IMR-90 (cell line): ENCODE measurements at regions of chr3 and their contacts with region 1.

Region 1: GRCh38 chr3:66138336-66139313 is 82.2 kb upstream of the SLC25A26 start:
- DNase-seq: peak; percentile 68
- ATAC-seq: peak; percentile 89
- H3K4me3 ChIP-seq: no peak overlapping the region
- H3K27ac ChIP-seq: no peak overlapping the region
- H3K4me1 ChIP-seq: peaks cover under 1% of the 10 kb centered on the region
- H3K27me3 ChIP-seq: no peaks in the 10 kb centered on the region
- CTCF ChIP-seq: peak; percentile 83
- POLR2A ChIP-seq: 0 out of 2 replicates have a peak, but pooled peaks have one; percentile 23
- RAD21 ChIP-seq: peak; percentile 91

Region 2: GRCh38 chr3:65888980-65889706 is 249.5 kb before region 1 on chr3:
- CTCF ChIA-PET with region 1: no interaction called
- POLR2A ChIA-PET with region 1: no interaction called
- dilution Hi-C with region 1: no loop called
- in situ Hi-C with region 1: no loop called
- intact Hi-C with region 1: loop called (anchors 10 kb)
- DNase-seq: peak; percentile 98
- ATAC-seq: peak; percentile 97
- H3K4me3 ChIP-seq: peak overlapping the region; percentile 30; the same call in 1 of the 2 replicates
- H3K27ac ChIP-seq: peak overlapping the region; percentile 57
- H3K4me1 ChIP-seq: peaks cover 11% of the 10 kb centered on the region
- H3K27me3 ChIP-seq: no peaks in the 10 kb centered on the region
- CTCF ChIP-seq: no peak
- POLR2A ChIP-seq: peak; percentile 44; the same call in 1 of the 2 replicates
- RAD21 ChIP-seq: peak; percentile 15; the same call in 1 of the 2 replicates

Region 3: DNA sequence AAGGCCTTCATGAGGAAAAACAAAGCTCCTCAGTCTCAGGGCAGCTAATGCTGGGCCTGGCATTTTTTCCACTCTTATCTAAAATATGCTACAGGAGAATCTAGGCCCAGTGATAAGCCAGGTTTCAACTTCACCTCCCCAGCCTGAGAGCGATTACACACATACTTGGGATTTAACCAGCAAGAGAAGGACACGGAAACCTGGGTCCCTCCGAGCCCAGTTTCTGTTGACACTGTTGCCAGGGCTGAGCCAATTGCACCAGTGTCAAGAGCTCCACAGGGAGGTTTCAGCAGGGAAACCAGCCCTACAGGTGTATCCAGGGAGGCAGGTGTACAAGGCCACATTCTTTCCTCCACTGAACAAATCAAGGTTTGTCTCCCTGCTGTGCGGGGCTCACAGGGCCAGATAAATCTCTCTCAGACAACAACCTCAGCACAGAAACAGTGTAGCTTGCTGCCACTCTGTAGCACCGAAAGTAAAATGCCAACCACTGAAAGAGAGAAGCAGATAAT is 185.3 kb before region 1 on chr3:
- CTCF ChIA-PET with region 1: no interaction called
- POLR2A ChIA-PET with region 1: no interaction called
- dilution Hi-C with region 1: no loop called
- in situ Hi-C with region 1: no loop called
- intact Hi-C with region 1: loop called (anchors 10 kb)
- DNase-seq: no peak
- ATAC-seq: no peak
- H3K4me3 ChIP-seq: no peak overlapping the region
- H3K27ac ChIP-seq: no peak overlapping the region
- H3K4me1 ChIP-seq: peaks cover 20% of the 10 kb centered on the region
- H3K27me3 ChIP-seq: no peaks in the 10 kb centered on the region
- CTCF ChIP-seq: no peak
- POLR2A ChIP-seq: no peak
- RAD21 ChIP-seq: no peak

Region 4: DNA sequence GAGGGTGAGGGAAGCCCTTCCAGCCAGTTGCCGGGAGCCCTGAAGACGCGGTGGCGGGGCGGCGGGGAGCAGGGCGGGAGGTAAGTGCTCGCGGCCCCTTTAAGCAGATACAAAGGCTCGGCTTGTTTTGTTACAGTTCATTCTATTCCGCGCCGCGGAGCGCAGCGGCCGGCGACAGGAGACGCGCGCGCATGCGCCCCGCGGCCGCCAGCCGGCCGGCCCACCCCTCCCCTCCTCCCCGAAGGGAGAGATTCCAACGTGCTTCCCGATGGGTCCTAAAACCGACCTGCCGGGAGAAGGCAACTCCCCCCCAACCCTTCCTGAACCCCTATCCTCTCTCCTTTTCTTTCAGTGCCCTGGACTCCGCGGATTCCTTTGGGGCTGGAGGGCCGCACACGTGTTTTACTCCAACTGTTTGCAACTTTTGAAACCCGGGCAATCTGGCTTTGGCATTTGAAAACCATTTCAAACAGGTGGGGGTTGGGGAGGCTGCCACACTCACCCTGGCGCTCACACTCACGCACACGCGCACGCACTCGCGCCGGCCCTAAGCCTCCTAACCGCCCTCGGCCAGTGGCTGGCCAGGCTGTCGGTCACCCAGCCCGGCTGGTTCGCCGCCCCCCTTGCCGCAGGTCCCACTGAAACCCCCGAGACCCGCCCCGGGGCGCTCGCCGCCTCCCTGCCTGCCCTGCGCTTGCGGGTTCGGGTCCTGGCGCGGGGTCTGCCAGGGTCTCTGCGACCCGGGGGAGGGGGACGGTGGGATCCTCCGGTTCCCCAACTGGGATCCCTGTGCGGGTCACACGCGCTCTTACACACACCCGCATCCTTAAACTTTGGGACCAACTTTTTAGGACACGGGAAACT is 99.7 kb before region 1 on chr3 and contains the start of gene MAGI1:
- CTCF ChIA-PET with region 1: interaction called, 3 read pairs
- POLR2A ChIA-PET with region 1: interaction called, 3 read pairs
- dilution Hi-C with region 1: no loop called
- in situ Hi-C with region 1: loop called (anchors 10 kb)
- intact Hi-C with region 1: loop called (anchors 1 kb)
- DNase-seq: peak; percentile 95
- ATAC-seq: peak; percentile 85
- H3K4me3 ChIP-seq: peak within 1 kb of the TSS; percentile 69
- H3K27ac ChIP-seq: peak within 1 kb of the TSS; percentile 88
- H3K4me1 ChIP-seq: peaks cover 29% of the 10 kb centered on the region
- H3K27me3 ChIP-seq: no peaks in the 10 kb centered on the region
- CTCF ChIP-seq: no peak
- POLR2A ChIP-seq: peak; percentile 58
- RAD21 ChIP-seq: no peak; the same call in 1 of the 2 replicates
- total RNA-seq, gene MAGI1: 24.2 and 26.4 TPM in 2 replicates

Region 5: GRCh38 chr3:66047311-66048050 is 91.1 kb before region 1 on chr3:
- CTCF ChIA-PET with region 1: no interaction called
- POLR2A ChIA-PET with region 1: no interaction called
- dilution Hi-C with region 1: no loop called
- in situ Hi-C with region 1: loop called (anchors 10 kb)
- intact Hi-C with region 1: no loop called
- DNase-seq: peak; percentile 80
- ATAC-seq: peak; percentile 88
- H3K4me3 ChIP-seq: no peak overlapping the region
- H3K27ac ChIP-seq: peak overlapping the region; percentile 1; the same call in 1 of the 2 replicates
- H3K4me1 ChIP-seq: peaks cover 6% of the 10 kb centered on the region
- H3K27me3 ChIP-seq: no peaks in the 10 kb centered on the region
- CTCF ChIP-seq: no peak
- POLR2A ChIP-seq: no peak
- RAD21 ChIP-seq: no peak

Region 6: GRCh38 chr3:66103729-66104128 is 34.9 kb before region 1 on chr3:
- CTCF ChIA-PET with region 1: interaction called, 4 read pairs
- POLR2A ChIA-PET with region 1: no interaction called
- dilution Hi-C with region 1: no loop called
- in situ Hi-C with region 1: no loop called
- intact Hi-C with region 1: loop called (anchors 1 kb)
- DNase-seq: no peak
- ATAC-seq: no peak
- H3K4me3 ChIP-seq: no peak overlapping the region
- H3K27ac ChIP-seq: no peak overlapping the region
- H3K4me1 ChIP-seq: peaks cover 3% of the 10 kb centered on the region
- H3K27me3 ChIP-seq: no peaks in the 10 kb centered on the region
- CTCF ChIP-seq: no peak
- POLR2A ChIP-seq: no peak
- RAD21 ChIP-seq: no peak